GM12878 (cell line): ENCODE measurements at regions of chr6 and their contacts with region 1.

Region 1: DNA sequence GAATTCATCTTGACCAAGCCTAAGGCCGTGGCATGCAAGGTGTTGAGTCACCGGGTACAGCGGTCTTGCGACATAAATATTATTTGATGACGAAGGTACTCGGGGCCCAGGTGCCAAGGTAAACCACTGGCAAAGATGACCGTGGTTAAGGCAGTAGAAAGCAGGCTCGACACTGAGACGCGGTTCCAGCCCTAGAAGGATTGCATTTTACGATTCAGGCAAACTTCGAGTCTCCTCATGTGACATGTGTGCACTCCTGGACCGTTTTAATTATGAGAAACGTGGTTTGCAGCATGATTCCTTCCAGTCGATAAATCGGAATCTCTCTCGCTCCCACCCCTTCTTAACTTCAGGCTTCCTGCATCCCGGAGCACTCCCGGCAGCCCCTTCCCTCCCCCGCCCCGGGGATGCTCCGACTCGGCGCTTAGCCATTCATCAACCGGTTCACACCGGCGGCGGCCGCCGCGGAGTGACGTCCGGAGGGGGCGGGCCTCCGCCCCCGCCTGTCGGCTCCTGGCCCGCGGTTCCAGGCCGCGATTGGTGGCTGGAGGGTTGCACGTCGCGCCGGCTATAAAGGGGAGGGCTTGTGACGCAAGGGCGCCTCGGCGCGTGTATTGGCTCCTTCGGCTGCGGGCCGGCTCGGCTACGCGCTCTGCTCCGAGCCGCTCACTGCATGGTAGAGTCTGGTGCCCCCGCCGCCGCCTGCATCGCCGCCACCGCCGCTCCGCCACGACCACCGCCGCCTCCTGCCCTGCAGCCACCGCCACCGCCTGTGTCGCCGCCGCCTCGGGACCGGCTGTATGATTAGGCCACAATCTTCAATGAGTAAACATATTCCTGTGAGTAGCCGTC is at the starts of genes LOC128125822 and PTP4A1:
- DNase-seq: peak; percentile 81
- ATAC-seq: peak; percentile 91
- H3K4me3 ChIP-seq: peak within 1 kb of the TSS; percentile 80
- H3K27ac ChIP-seq: peak within 1 kb of the TSS; percentile 98
- H3K4me1 ChIP-seq: no peaks in the 10 kb centered on the region; the same call in 1 of the 2 replicates
- H3K27me3 ChIP-seq: no peaks in the 10 kb centered on the region
- CTCF ChIP-seq: no peak
- EP300 ChIP-seq: peak in 1 of 2 experiments; percentile 68; a peak in 2 of 4 replicates
- POLR2A ChIP-seq: peak; percentile 91
- RAD21 ChIP-seq: no peak
- polyA plus RNA-seq, gene PTP4A1: not detected

Region 2: GRCh38 chr6:63307581-63308246 is 264.4 kb before region 1 on chr6:
- CTCF ChIA-PET with region 1: interaction called, 3 read pairs
- POLR2A ChIA-PET with region 1: no interaction called
- RAD21 ChIA-PET with region 1: no interaction called
- SMC1A ChIA-PET with region 1: no interaction called
- in situ Hi-C with region 1: no loop called
- intact Hi-C with region 1: loop called (anchors 5 kb)
- DNase-seq: peak; percentile 13
- ATAC-seq: peak; percentile 99
- H3K4me3 ChIP-seq: no peak overlapping the region
- H3K27ac ChIP-seq: no peak overlapping the region
- H3K4me1 ChIP-seq: no peaks in the 10 kb centered on the region
- H3K27me3 ChIP-seq: no peaks in the 10 kb centered on the region
- CTCF ChIP-seq: peak; percentile 60 to 70 (median 63)
- EP300 ChIP-seq: no peak
- POLR2A ChIP-seq: no peak
- RAD21 ChIP-seq: peak; percentile 76

Region 3: GRCh38 chr6:63434942-63435341 is 137.2 kb before region 1 on chr6:
- CTCF ChIA-PET with region 1: no interaction called
- POLR2A ChIA-PET with region 1: no interaction called
- RAD21 ChIA-PET with region 1: no interaction called
- SMC1A ChIA-PET with region 1: no interaction called
- in situ Hi-C with region 1: no loop called
- intact Hi-C with region 1: no loop called
- DNase-seq: no peak
- ATAC-seq: no peak
- H3K4me3 ChIP-seq: no peak overlapping the region
- H3K27ac ChIP-seq: no peak overlapping the region
- H3K4me1 ChIP-seq: no peaks in the 10 kb centered on the region
- H3K27me3 ChIP-seq: no peaks in the 10 kb centered on the region; a peak in 1 of 4 replicates
- CTCF ChIP-seq: no peak
- EP300 ChIP-seq: no peak
- POLR2A ChIP-seq: no peak
- RAD21 ChIP-seq: no peak

Region 4: DNA sequence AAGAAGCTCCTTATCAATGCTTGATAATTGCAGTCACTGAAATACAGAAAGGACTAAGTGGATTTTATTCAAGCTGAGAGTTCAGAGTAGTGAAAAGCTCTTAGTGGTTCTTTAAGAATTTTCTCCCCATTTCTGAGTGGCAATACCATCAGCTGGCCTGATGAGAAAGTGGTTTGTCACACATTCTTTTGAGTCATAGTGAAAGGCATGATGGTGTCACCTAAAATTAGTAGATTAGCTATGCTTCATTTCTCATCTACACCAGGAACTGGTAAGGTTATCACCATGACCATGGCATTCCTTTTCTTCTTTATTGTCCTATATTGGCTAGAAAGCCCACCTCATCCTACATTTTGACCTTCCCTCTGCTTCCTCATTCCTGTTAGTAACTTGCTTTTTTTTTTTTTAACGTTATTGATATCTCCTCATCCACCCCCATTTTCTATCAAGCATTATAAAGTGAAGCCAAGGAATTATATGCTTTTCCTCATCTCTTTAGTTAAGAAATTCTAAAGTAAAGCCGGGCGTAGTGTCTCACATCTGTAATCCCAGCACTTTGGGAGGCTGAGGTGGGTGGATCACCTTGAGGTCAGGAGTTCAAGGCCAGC is 67.2 kb before region 1 on chr6:
- CTCF ChIA-PET with region 1: interaction called, 28 read pairs
- POLR2A ChIA-PET with region 1: interaction called, 7 read pairs
- RAD21 ChIA-PET with region 1: interaction called, 11 read pairs
- SMC1A ChIA-PET with region 1: interaction called, 18 read pairs
- in situ Hi-C with region 1: no loop called
- intact Hi-C with region 1: loop called (anchors 1 kb)
- DNase-seq: peak; percentile 89
- ATAC-seq: peak; percentile 93
- H3K4me3 ChIP-seq: 0 out of 2 replicates have a peak overlapping the region, but pooled peaks have one; percentile 18
- H3K27ac ChIP-seq: peak overlapping the region; percentile 66
- H3K4me1 ChIP-seq: peaks cover 30% of the 10 kb centered on the region
- H3K27me3 ChIP-seq: no peaks in the 10 kb centered on the region
- CTCF ChIP-seq: no peak
- EP300 ChIP-seq: peak; percentile 92 to 98
- POLR2A ChIP-seq: no peak
- RAD21 ChIP-seq: peak; percentile 29; the same call in 1 of the 2 replicates

Region 5: GRCh38 chr6:63516186-63516944 is 55.7 kb before region 1 on chr6:
- CTCF ChIA-PET with region 1: interaction called, 9 read pairs
- POLR2A ChIA-PET with region 1: interaction called, 7 read pairs
- RAD21 ChIA-PET with region 1: interaction called, 7 read pairs
- SMC1A ChIA-PET with region 1: interaction called, 11 read pairs
- in situ Hi-C with region 1: no loop called
- intact Hi-C with region 1: loop called (anchors 1 kb)
- DNase-seq: no peak
- ATAC-seq: no peak
- H3K4me3 ChIP-seq: no peak overlapping the region
- H3K27ac ChIP-seq: no peak overlapping the region
- H3K4me1 ChIP-seq: peaks cover 18% of the 10 kb centered on the region
- H3K27me3 ChIP-seq: no peaks in the 10 kb centered on the region
- CTCF ChIP-seq: no peak
- EP300 ChIP-seq: no peak
- POLR2A ChIP-seq: no peak
- RAD21 ChIP-seq: no peak

Region 6: DNA sequence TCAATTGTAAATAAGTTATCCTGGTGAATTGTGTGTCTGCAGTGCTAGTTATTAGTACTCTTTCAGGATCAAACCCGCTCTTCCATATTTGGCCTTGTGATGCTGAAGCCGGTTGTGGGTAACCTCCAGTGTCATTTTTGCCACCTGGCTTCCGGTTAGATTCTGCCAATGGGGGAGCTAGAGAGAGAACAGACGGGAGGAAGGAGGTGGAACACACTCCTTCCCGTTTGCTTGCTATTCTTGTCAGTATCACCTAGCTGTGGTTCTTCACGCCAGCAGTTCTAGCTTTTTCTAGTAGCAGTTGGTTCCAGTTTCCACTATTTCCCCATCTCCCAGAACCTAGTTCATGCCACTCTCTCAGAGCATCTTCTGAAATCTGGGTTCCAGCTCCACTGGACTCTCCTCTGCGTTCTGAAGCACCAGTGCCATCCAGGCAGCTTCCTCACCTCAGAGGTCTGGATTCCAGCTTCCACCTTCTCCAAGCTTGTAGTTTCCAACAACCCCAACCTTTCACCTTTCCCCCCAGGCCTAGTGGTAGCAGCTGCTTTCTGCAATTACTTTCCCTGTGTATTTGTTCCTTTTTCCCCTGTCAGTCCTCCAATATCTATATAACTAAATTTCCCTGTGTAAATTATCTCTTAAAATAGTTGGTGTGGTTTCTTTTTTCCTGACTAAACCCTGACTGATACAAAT is 46.8 kb before region 1 on chr6:
- CTCF ChIA-PET with region 1: interaction called, 6 read pairs
- POLR2A ChIA-PET with region 1: interaction called, 3 read pairs
- RAD21 ChIA-PET with region 1: interaction called, 8 read pairs
- SMC1A ChIA-PET with region 1: interaction called, 11 read pairs
- in situ Hi-C with region 1: no loop called
- intact Hi-C with region 1: no loop called
- DNase-seq: no peak
- ATAC-seq: peak; percentile 40
- H3K4me3 ChIP-seq: no peak overlapping the region
- H3K27ac ChIP-seq: no peak overlapping the region
- H3K4me1 ChIP-seq: peaks cover 21% of the 10 kb centered on the region
- H3K27me3 ChIP-seq: no peaks in the 10 kb centered on the region
- CTCF ChIP-seq: 0 out of 6 replicates have a peak, but pooled peaks of 1 of the 3 experiments have one; percentile 4
- EP300 ChIP-seq: no peak
- POLR2A ChIP-seq: no peak
- RAD21 ChIP-seq: no peak

Region 7: DNA sequence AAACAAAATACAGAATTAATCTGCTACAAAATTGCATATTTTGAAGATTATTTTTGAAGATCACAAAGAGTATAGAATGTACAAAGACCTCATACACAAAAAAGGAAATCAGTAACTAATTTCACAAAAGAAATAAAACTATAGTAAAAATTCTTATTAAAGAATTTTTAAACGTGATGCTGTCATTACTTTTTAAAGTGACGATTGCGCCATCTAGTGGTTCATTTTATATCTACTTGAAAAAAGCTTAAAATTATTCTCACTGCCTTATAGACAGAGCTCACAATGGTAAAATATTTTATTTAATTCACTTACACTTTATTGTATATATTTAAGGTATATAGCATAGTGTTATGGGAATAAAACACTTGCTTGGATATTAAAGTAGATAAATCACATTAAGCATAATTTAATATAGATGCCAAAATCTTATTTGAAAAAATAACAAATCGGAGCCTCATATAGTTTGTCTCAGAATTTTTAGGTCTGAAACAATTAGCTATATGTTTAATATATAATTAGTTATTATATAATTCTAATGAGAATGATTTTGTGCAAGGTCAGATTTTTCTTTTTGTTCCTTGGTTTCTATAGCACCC is 192.3 kb after region 1 on chr6:
- CTCF ChIA-PET with region 1: interaction called, 15 read pairs
- POLR2A ChIA-PET with region 1: interaction called, 3 read pairs
- RAD21 ChIA-PET with region 1: interaction called, 13 read pairs
- SMC1A ChIA-PET with region 1: interaction called, 13 read pairs
- in situ Hi-C with region 1: no loop called
- intact Hi-C with region 1: no loop called
- DNase-seq: peak; percentile 5
- ATAC-seq: peak; percentile 64
- H3K4me3 ChIP-seq: no peak overlapping the region
- H3K27ac ChIP-seq: no peak overlapping the region
- H3K4me1 ChIP-seq: no peaks in the 10 kb centered on the region
- H3K27me3 ChIP-seq: no peaks in the 10 kb centered on the region
- CTCF ChIP-seq: no peak; a peak in 2 of 6 replicates
- EP300 ChIP-seq: no peak
- POLR2A ChIP-seq: no peak
- RAD21 ChIP-seq: peak; percentile 63

Region 8: DNA sequence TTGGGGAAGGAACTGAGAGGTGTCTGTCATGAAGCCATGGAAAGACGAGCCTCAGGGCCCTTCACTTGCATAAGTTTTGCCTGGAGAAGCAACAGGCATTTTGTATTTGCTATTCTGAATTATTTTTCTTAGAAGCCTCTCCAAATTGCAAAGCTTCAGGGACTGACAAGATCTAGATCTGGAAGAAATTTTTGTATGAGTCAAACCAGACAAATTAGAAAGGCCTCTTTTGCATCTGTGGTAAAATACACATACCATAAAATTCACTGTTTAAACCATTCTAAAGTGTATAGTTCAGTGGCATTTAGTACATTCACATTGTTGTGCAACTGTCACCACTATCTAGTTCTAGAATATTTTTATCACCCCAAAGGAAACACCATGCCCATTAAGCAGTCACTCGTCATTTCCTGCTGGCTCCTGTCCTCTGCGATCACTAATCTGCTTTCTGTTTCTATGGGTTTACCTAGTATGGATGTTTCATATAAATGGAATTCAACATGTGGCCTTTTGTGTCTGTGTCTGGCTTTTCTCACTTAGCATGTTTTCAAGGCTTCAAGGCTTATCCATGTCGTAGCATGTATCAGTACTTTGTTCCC is 332.6 kb after region 1 on chr6:
- CTCF ChIA-PET with region 1: no interaction called
- POLR2A ChIA-PET with region 1: no interaction called
- RAD21 ChIA-PET with region 1: no interaction called
- SMC1A ChIA-PET with region 1: no interaction called
- in situ Hi-C with region 1: no loop called
- intact Hi-C with region 1: no loop called
- DNase-seq: no peak
- ATAC-seq: peak; percentile 66
- H3K4me3 ChIP-seq: no peak overlapping the region
- H3K27ac ChIP-seq: no peak overlapping the region
- H3K4me1 ChIP-seq: no peaks in the 10 kb centered on the region
- H3K27me3 ChIP-seq: no peaks in the 10 kb centered on the region
- CTCF ChIP-seq: no peak
- EP300 ChIP-seq: no peak
- POLR2A ChIP-seq: no peak
- RAD21 ChIP-seq: no peak